Activated T-helper 2 cell treated with anti-CD3 and anti-CD28 coated beads, Interferon-gamma antibody, Interleukin-2, Interleukin-4, amounts not matched to agents 10 μg/mL and 5 μg/mL and 100 μg/mL, durations not matched to agents 14 hours and 24 hours and 36 hours (primary cell): ENCODE measurements at regions of chr10 and their contacts with region 1.

Region 1: DNA sequence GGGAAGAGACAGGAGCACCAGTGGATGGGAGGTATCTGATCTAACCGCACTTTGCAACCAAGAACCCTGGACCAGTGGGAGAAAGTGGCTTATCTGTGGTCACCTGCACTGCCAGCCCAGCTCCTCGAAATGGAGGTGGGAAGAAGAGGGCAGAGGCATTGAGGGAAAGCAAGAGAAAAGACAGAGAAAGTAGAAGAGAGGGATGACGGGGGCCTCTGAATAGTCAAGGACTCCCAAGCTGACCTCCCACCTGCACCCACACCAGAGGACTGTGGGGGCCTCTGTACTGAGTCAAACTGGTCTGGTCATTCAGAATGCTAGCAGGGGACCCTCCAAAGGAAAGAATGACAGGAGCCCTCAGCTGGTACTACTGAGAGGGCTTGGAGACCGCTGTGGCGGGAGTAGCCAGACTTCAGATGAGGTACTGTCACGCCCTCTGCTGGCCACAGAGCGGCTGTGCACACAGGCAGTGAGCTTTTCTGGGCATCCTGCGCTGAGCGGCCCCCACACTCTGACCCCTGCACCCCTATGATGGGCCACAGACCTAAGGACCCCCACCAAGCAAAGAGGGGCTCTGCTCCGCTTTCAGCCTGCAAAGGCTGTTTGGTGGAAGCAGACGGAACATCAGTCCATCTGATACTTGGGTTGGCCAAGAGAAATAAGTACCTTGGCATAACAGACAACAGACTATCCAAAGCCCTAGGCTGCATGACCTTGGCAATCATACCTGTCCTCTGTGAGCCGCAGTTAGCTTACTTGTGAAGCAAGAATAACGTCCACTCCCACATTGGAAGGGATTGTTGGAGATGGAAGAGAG is 112.9 kb downstream of the COL13A1 start:
- DNase-seq: peak; percentile 33
- H3K4me3 Mint-ChIP-seq: no peak overlapping the region
- H3K27ac Mint-ChIP-seq: no peak overlapping the region
- H3K4me1 Mint-ChIP-seq: no peaks in the 10 kb centered on the region
- H3K27me3 Mint-ChIP-seq: peaks cover 7% of the 10 kb centered on the region

Region 2: DNA sequence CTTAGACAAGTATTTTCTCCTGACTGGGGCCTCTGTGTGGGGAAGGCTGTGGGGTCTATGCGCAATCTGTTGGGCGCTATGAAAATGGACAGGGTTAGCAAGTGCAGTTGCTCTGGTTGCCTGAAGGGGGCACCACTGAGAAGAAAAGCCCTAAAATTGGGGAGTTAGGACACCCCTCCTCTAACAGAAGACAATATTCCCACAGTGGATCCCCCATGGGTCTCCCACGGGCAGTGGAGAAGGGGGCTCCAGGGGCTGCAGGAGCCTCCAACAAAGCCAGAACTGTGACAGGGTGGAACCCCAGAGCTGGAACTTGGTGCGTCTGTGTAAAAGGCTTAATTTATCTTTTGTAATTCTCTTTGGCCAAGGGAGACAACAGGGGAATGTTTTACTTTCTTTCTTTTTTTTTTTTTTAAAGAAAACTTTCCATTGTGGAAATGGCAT is 125.5 kb before region 1 on chr10:
- intact Hi-C with region 1: loop called (anchors 1 kb)
- DNase-seq: no peak
- H3K4me3 Mint-ChIP-seq: no peak overlapping the region
- H3K27ac Mint-ChIP-seq: no peak overlapping the region
- H3K4me1 Mint-ChIP-seq: peaks cover 5% of the 10 kb centered on the region
- H3K27me3 Mint-ChIP-seq: peaks cover 8% of the 10 kb centered on the region

Region 3: DNA sequence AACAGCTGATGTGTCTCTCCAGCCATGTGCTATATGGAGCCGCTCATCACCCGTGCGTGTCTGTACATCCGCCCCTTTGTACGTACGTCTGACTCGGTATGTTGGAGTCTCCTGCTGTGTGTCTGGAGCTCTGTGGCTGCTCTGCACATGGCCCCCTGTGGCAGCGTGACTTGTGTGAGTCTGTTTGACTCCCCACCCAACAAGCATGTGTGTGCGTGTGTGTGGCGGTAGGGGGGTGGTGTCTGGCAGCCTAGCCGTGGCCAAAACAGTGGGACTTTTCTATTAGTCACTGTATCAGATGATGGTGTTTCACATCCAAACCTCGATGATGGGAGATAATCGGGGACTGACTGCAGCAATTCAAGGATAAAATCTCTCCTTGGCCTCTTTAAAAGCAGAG is 18.8 kb before region 1 on chr10:
- intact Hi-C with region 1: no loop called
- DNase-seq: no peak
- H3K4me3 Mint-ChIP-seq: no peak overlapping the region
- H3K27ac Mint-ChIP-seq: no peak overlapping the region
- H3K4me1 Mint-ChIP-seq: no peaks in the 10 kb centered on the region
- H3K27me3 Mint-ChIP-seq: no peaks in the 10 kb centered on the region